ENCODE measurements at regions of chr2 and their contacts with region 1.

Region 1: GRCh38 chr2:218557941-218558340 is 10.2 kb downstream of the USP37 start:
- DNase-seq: no peak
- H3K4me3 ChIP-seq: no peak overlapping the region
- H3K27ac ChIP-seq: no peak overlapping the region
- H3K4me1 ChIP-seq: no peaks in the 10 kb centered on the region
- H3K27me3 ChIP-seq: no peaks in the 10 kb centered on the region
- CTCF ChIP-seq: no peak
- EP300 ChIP-seq: no peak
- POLR2A ChIP-seq: no peak

Region 2: DNA sequence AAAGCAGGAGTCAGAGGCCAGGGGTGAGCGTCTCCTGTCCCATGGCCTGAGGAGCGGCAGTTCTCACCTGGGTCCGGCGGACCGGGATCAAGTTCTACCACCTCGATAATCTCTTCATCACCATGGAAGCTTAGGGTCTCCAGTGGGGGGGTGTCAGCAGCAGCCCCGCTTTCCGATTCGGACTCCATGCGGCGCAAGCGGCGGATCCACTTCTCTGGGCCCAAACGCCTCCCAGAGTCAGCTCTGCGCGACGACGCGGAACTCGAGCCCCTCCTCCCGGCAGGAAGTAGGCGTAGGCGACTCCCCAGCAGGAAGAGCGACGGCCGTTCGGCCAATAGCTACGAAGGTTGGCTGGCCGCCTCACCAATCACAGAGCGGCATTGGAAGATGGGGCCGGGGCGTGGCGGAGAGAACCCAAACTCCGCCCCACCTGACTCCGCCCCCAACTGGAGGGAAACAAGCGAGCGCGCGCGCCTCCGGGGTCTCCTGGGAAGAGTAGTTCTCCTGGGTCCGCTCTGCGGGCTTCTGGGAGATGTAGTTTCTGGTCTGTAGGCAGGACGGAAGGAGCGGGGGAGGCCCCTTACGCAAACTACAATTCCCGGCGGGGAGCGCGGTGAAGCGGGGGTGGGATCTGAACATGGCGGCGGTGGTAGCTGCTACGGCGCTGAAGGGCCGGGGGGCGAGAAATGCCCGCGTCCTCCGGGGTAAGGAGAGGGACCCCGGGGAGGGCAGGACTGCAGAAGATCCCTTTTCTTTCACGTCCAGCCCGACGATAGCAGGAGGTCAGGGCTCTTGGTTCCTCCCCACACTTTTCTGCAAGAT is 287.8 kb before region 1 on chr2 and contains the starts of genes AAMP and PNKD:
- in situ Hi-C with region 1: no loop called
- intact Hi-C with region 1: no loop called
- DNase-seq: peak; percentile 100
- H3K4me3 ChIP-seq: peak within 1 kb of the TSS; percentile 67 to 98 (median 84)
- H3K27ac ChIP-seq: peak within 1 kb of the TSS; percentile 87 to 94 (median 88)
- H3K4me1 ChIP-seq: peaks cover 29 to 65% (median 50%) of the 10 kb centered on the region in 4 donors
- H3K27me3 ChIP-seq: no peaks in the 10 kb centered on the region
- CTCF ChIP-seq: peak in 1 of 5 experiments; percentile 18
- EP300 ChIP-seq: no peak
- POLR2A ChIP-seq: peak; percentile 84
- total RNA-seq, gene AAMP: 96.9 to 466 (median 174) TPM
- total RNA-seq, gene PNKD: 14.3 to 111 (median 100) TPM

Region 3: DNA sequence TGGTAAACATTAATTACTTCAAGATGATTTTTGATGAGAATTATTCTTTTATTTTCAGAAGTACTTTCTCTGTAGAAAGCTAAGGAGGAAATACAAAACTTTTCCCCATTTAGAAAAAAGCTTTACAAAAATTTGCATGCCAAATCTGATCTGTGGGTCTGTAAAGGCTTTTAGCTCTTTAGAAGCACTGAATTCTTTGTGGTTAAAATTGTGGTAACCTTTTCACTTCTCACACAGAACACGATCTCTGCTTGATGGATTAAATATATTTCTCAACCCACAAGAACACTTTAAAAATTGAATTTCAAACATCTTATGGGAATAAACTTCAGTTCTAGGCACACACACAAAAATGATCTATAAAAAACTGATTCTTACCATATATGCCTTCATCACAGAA is 75.3 kb before region 1 on chr2:
- in situ Hi-C with region 1: no loop called
- intact Hi-C with region 1: loop called (anchors 10 kb)
- DNase-seq: no peak
- H3K4me3 ChIP-seq: no peak overlapping the region
- H3K27ac ChIP-seq: no peak overlapping the region
- H3K4me1 ChIP-seq: peaks cover 0 to 4% (median 0%) of the 10 kb centered on the region in 4 donors
- H3K27me3 ChIP-seq: no peaks in the 10 kb centered on the region
- CTCF ChIP-seq: no peak
- EP300 ChIP-seq: no peak
- POLR2A ChIP-seq: no peak

Measured in transverse colon (tissue), 4 donors.